ENCODE measurements at regions of chr6 and their contacts with region 1.

Region 1: GRCh38 chr6:47097092-47097945 is 55.2 kb upstream of the ADGRF1 start:
- DNase-seq: no peak

Region 2: DNA sequence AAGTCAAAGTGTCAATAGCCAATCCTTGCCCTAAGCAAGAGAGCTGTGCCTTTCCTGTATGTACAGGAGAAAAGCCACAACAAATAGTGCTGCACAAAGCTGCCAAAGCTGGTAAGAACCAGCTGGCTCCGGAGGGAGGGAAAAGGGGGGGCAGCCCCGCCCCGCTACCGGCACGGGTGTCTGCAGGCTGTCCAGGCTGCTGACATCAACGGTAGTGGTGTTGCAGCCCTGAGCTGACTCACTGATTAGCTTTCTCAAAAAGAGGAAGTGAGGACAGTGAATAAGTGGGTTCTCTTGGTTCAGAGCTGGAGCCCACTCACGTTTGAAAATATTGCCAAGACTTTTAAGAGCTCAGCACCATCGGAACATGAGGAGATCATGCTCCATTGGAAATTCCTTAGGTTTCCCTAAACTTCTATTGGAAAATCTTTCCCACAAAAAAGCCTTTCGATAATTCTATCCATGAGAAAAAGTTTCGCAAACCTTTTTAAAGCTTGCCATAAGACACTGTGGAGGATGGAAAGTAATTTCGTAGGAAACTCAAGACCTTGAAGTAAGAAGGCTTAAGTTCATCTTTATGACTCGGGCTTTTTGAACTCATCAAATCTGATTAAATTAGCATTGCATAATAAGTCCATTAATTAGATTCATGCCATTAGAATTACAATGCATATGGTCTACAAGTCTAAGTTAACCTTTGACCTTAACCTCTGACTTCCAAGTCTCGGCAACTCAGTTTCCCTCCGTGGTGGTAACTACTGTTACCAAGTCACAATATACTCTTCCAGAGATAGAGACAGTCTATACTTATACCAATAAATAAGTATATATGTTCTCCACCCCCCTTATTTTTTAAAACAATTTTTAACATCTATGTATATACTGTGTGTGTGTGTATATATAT is 145.4 kb after region 1 on chr6:
- intact Hi-C with region 1: loop called (anchors 10 kb)
- DNase-seq: peak; percentile 89

Region 3: GRCh38 chr6:47309291-47310130 is 212.2 kb after region 1 on chr6 and contains the start of gene TNFRSF21:
- intact Hi-C with region 1: loop called (anchors 2 kb)
- DNase-seq: peak; percentile 93
- total RNA-seq, gene TNFRSF21: 3.5 TPM